ENCODE measurements at regions of chr15 and their contacts with region 1.

Region 1: DNA sequence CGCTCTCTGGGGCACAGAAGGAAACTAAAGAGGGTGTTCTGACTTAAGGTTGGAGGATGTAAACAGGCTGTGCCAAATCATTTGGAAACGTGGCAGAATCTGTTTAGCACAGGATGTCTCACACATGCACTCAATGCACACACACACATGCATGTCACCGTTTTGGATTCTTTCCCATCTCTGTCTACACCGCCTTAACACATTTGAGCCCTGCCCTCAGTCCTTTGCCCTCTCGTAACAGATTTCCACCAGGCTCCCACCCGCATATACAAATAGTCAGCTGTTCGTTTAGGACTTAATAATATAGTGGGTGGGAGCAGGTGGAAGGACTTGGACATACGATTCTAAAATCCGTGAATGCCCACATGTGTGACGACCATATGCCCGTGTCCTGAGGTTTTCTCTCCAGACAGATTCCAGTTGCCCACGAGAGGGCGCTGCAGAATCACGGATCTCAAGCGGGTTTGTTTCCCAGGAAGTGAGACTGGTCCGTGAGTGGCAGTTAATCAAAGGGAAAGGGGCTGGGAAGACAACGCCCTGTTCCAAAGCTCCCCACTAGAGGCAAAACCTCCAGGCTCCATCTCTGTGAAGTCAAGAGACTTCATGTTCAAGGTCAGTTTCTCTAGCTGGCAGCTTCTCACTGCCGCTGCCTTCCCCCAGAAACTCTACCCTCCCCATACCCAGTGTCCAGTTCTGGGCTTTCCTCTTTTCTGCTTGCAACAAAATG is 44.5 kb downstream of the NOX5 start:
- DNase-seq: peak; percentile 78
- CTCF ChIP-seq: peak; percentile 86

Region 2: GRCh38 chr15:68739390-68740080 is 319.5 kb before region 1 on chr15:
- in situ Hi-C with region 1: no loop called
- DNase-seq: no peak
- CTCF ChIP-seq: no peak

Region 3: GRCh38 chr15:69141286-69141701 is 82.3 kb after region 1 on chr15:
- in situ Hi-C with region 1: no loop called
- DNase-seq: no peak
- CTCF ChIP-seq: no peak

Region 4: GRCh38 chr15:69265347-69265955 is 206.5 kb after region 1 on chr15:
- in situ Hi-C with region 1: loop called (anchors 25 kb)
- DNase-seq: no peak
- CTCF ChIP-seq: peak; percentile 37

Region 5: DNA sequence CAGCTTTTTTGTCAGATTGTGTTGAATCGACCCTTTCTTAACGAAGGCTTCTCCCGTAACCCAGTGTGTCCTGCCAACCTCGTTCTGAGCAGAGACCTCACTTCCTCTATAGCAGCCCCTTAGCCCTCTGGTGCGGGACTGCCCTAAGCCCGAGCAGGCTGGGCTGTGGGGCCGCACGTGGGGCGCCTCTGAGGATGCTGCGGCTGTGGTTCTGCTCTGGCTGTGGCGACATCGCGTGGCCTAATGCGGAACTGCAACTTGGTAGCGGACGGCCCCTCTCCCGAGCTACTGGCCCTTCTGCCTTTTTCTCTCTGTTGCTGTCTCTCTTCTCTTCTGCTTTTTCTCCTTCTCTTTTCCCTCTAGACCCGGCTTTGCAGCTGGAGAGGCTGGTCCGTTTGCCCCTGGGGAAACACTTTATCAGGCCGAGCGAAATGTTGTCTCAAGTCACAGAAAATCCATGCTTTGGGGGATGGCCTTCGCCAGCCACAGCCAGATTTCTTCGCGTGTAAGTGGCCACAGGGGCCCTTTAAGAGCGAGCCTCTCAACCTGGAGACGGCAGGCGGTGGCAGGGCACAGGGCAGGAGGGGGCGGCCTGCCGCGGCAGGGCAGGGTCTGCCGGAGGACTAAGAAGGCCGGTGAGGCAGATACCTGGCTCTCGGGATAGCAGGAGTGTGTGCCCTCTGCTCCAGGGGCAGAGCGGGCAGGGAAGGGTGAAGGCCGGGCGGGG is 335.7 kb after region 1 on chr15:
- in situ Hi-C with region 1: loop called (anchors 25 kb)
- DNase-seq: peak; percentile 90
- CTCF ChIP-seq: peak; percentile 97